ENCODE measurements at regions of chr5 and their contacts with region 1.

Region 1: DNA sequence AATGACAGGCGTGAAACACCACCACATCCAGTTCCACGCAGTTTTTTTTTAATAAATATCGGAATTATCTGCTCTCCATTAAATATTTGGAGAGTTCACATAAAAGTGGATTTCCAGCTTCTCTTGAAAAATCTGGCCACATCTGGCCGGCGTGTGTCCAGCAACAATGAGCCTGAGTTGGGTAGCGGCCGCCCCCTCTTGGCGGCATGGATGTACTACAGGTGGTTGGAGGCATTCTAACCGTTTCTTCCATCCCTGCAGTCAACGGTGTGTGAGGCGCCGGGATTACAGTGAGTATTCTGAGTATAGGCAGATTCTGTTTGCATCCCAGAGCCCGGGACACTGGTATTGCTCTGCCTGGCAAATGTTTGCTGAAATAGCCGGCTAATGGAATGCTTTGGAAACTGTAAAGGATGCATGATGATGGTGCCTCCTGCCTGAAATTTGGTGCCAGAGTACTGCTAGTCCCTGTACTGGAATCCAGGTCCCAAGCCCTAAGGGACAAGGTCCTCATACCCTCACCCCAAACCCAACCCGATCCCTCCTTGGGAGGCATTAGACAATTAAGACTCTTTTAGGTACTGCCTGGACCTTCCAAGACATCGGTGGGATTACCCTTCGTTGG is 13.6 kb upstream of the GM2A start:
- DNase-seq: peak; percentile 65 to 82
- H3K4me3 ChIP-seq: peak overlapping the region; percentile 34 to 40
- H3K27ac ChIP-seq: peak overlapping the region; percentile 58 to 85
- H3K4me1 ChIP-seq: peaks cover 0 to 29% (median 4%) of the 10 kb centered on the region in 4 donors
- H3K27me3 ChIP-seq: no peaks in the 10 kb centered on the region
- CTCF ChIP-seq: peak; percentile 67 to 70

Region 2: GRCh38 chr5:149549461-149550267 is 1689.7 kb before region 1 on chr5:
- intact Hi-C with region 1: no loop called
- DNase-seq: no peak
- H3K4me3 ChIP-seq: peak overlapping the region; percentile 92 to 96
- H3K27ac ChIP-seq: peak overlapping the region; percentile 97 to 99
- H3K4me1 ChIP-seq: peaks cover 0 to 55% (median 28%) of the 10 kb centered on the region in 4 donors
- H3K27me3 ChIP-seq: no peaks in the 10 kb centered on the region
- CTCF ChIP-seq: no peak

Region 3: GRCh38 chr5:151126199-151126645 is 113.1 kb before region 1 on chr5:
- intact Hi-C with region 1: loop called (anchors 5 kb)
- DNase-seq: peak; percentile 73 to 78
- H3K4me3 ChIP-seq: no peak overlapping the region
- H3K27ac ChIP-seq: no peak overlapping the region
- H3K4me1 ChIP-seq: peaks cover 0 to 12% (median 7%) of the 10 kb centered on the region in 4 donors
- H3K27me3 ChIP-seq: no peaks in the 10 kb centered on the region
- CTCF ChIP-seq: peak; percentile 72 to 87

Region 4: GRCh38 chr5:151213800-151214613 is 25.3 kb before region 1 on chr5:
- intact Hi-C with region 1: no loop called
- DNase-seq: peak; percentile 88 to 89
- H3K4me3 ChIP-seq: no peak overlapping the region
- H3K27ac ChIP-seq: peak overlapping the region in 1 of 2 donors; percentile 28
- H3K4me1 ChIP-seq: peaks cover 0 to 22% (median 5%) of the 10 kb centered on the region in 4 donors
- H3K27me3 ChIP-seq: no peaks in the 10 kb centered on the region
- CTCF ChIP-seq: no peak

Region 5: GRCh38 chr5:151224372-151224771 is 15.0 kb before region 1 on chr5:
- intact Hi-C with region 1: no loop called
- DNase-seq: no peak
- H3K4me3 ChIP-seq: peak overlapping the region; percentile 77 to 86
- H3K27ac ChIP-seq: peak overlapping the region; percentile 79 to 83
- H3K4me1 ChIP-seq: peaks cover 0 to 45% (median 34%) of the 10 kb centered on the region in 4 donors
- H3K27me3 ChIP-seq: no peaks in the 10 kb centered on the region
- CTCF ChIP-seq: peak in 1 of 2 experiments; percentile 0

Region 6: GRCh38 chr5:151315998-151316597 is 76.7 kb after region 1 on chr5:
- intact Hi-C with region 1: no loop called
- DNase-seq: peak; percentile 69 to 78
- H3K4me3 ChIP-seq: no peak overlapping the region
- H3K27ac ChIP-seq: no peak overlapping the region
- H3K4me1 ChIP-seq: peaks cover 0 to 9% (median 6%) of the 10 kb centered on the region in 4 donors
- H3K27me3 ChIP-seq: no peaks in the 10 kb centered on the region
- CTCF ChIP-seq: peak; percentile 60 to 76